ENCODE measurements at regions of chr9 and their contacts with region 1.

Region 1: DNA sequence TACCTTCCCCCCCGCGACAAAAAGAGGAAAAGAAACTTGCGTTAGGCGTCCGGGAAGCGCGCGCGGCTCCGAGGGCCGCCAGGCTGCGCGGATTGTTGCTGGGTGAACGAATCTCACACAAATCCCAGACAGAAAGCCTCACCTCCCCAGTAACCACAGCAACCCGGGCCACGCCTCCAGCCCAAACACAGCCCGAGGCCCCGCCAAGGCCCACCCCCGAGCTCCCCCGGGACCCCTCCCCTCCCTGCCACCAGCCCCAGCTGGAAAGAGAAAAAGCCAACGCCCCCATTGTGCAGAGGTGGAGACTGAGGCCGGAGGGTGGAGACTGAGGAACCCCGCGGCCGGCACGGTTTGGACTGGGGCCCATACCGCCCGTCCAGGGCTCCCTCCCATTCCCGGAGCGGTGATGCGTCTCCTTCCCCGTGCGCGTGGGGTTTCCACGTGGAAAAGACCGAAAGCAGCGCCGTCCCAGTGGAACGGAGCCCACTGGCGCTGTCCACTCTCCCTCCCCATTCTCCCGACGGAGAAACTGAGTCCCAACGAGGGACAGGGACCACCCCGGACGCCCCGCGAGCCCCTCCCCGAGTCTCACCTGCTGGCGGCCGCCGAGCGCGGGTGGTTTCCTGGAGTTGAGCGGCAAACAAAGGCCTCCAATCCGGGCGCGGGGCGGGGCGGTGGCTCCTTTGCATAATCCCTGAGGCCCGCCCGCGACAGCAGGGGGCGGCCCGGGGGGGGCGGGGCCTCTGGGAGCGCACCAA is 10.2 kb upstream of the AKNA start:
- DNase-seq: peak; percentile 97
- H3K4me3 Mint-ChIP-seq: peak overlapping the region; percentile 94
- H3K27ac Mint-ChIP-seq: peak overlapping the region; percentile 86
- H3K4me1 Mint-ChIP-seq: peaks cover 46% of the 10 kb centered on the region
- H3K27me3 Mint-ChIP-seq: no peaks in the 10 kb centered on the region

Region 2: DNA sequence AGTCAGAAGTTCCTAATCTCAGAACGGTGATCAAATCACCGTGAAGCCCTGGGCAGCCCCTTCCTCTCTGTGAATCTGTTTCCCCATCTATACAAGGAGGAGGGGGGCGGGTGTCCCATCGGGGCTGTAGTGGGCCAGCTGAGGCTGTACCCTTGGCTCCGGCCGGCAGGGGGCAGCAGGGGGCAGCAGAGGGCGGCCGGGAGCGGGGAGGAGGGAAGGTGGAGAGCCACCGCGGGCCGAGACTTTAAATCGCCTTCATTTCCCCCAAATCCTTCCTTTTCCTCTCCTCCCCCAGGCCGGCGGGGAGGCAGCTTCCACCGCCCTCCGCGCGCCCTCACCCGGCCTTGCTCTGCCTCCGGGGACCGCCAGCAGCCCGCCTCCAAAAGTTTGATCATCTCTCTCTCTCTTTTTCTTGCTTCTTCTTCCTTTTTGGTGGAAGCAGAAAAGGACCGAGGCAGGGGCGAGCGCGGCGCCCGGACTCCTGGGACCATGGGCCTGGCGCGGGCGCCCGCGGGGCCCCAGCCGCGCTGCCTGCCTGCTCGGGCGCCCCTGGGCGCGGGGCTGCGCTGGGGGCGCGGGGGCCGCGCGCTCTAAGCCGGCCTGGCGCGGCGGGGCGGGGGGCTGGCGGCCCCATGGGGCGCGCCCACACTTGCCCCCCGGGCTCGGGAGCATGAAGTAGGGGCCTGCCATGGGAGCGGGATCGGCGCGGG is 242.6 kb before region 1 on chr9 and contains the start of gene COL27A1:
- CTCF ChIA-PET with region 1: no interaction called
- intact Hi-C with region 1: loop called (anchors 10 kb)
- DNase-seq: peak; percentile 87
- H3K4me3 Mint-ChIP-seq: peak within 1 kb of the TSS; percentile 81
- H3K27ac Mint-ChIP-seq: peak within 1 kb of the TSS; percentile 62
- H3K4me1 Mint-ChIP-seq: peaks cover 16% of the 10 kb centered on the region
- H3K27me3 Mint-ChIP-seq: peaks cover 27% of the 10 kb centered on the region
- total RNA-seq, gene COL27A1: 7.0 to 10.6 TPM

Region 3: GRCh38 chr9:114339130-114339908 is 58.7 kb before region 1 on chr9:
- CTCF ChIA-PET with region 1: interaction called, 5 read pairs
- intact Hi-C with region 1: loop called (anchors 1 kb)
- DNase-seq: peak; percentile 66
- H3K4me3 Mint-ChIP-seq: no peak overlapping the region
- H3K27ac Mint-ChIP-seq: peak overlapping the region; percentile 66
- H3K4me1 Mint-ChIP-seq: peaks cover 15% of the 10 kb centered on the region
- H3K27me3 Mint-ChIP-seq: no peaks in the 10 kb centered on the region

Region 4: DNA sequence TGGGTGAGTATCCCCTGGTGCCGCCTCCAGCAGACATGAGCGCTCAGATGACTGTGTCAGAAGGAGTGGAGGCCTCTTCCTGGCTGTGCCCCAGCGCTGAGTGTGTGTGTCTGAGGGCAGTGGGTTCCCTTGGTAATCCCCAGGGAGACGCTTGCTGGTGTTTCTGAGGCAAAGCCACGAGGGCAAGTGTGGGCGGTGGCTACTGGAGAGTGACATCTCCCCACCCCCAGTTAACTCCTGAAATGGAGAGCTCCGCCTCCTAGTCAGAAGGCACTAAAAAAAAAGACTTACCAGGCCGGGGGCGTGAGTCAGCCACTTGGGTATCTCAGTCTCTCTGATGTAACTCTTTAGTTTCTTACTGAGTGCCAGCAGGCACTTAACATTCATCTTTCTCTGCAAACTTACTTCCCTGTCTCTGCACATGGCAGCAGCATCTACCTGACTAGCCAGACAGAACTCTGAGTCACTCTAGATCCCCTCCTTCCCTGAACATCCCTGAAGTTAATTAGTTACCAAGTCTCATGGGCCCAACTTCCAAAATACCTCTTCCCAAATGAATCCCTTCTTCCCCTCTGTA is 49.0 kb before region 1 on chr9:
- CTCF ChIA-PET with region 1: no interaction called
- intact Hi-C with region 1: loop called (anchors 1 kb)
- DNase-seq: peak; percentile 98
- H3K4me3 Mint-ChIP-seq: peak overlapping the region; percentile 24
- H3K27ac Mint-ChIP-seq: peak overlapping the region; percentile 98
- H3K4me1 Mint-ChIP-seq: peaks cover 49% of the 10 kb centered on the region
- H3K27me3 Mint-ChIP-seq: no peaks in the 10 kb centered on the region

Region 5: DNA sequence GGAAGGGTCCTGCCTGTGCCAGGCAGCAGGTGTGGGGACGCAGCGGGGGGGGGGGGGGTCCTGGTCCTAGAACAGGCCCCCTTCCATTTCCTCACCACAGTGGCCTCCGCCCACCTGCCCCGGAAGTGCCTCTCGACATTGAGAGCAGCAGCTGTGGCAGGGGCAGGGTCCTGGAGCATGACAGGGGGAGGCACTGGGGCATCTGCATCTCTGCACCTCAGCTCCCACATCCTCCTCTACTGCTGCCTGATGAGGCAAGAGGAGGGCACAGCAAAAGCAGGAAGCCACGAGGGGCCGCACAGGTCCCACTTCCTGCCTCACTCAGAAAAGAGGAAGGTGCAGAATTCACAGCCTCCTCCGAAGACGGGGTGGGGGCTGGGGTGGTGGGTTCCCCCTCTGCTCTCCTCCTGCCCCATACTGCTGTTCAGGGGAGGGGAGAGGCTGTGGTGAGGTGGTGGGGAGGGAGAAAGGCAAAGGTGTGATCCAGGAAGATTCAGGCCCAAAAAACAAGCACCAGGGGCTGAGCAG is 25.0 kb before region 1 on chr9:
- CTCF ChIA-PET with region 1: interaction called, 4 read pairs
- intact Hi-C with region 1: loop called (anchors 1 kb)
- DNase-seq: peak; percentile 93
- H3K4me3 Mint-ChIP-seq: peak overlapping the region; percentile 67
- H3K27ac Mint-ChIP-seq: peak overlapping the region; percentile 95
- H3K4me1 Mint-ChIP-seq: peaks cover 81% of the 10 kb centered on the region
- H3K27me3 Mint-ChIP-seq: no peaks in the 10 kb centered on the region

Region 6: GRCh38 chr9:114611516-114612271 is 213.7 kb after region 1 on chr9:
- CTCF ChIA-PET with region 1: no interaction called
- intact Hi-C with region 1: loop called (anchors 1 kb)
- DNase-seq: peak; percentile 37
- H3K4me3 Mint-ChIP-seq: peak overlapping the region; percentile 79
- H3K27ac Mint-ChIP-seq: peak overlapping the region; percentile 82
- H3K4me1 Mint-ChIP-seq: peaks cover 52% of the 10 kb centered on the region
- H3K27me3 Mint-ChIP-seq: no peaks in the 10 kb centered on the region